ENCODE measurements at regions of chr20 and their contacts with region 1.

Region 1: GRCh38 chr20:41094353-41095055 is 42.8 kb upstream of the PLCG1 start:
- DNase-seq: no peak
- H3K4me3 ChIP-seq: no peak overlapping the region
- H3K4me1 ChIP-seq: no peaks in the 10 kb centered on the region
- H3K27me3 ChIP-seq: no peaks in the 10 kb centered on the region

Region 2: DNA sequence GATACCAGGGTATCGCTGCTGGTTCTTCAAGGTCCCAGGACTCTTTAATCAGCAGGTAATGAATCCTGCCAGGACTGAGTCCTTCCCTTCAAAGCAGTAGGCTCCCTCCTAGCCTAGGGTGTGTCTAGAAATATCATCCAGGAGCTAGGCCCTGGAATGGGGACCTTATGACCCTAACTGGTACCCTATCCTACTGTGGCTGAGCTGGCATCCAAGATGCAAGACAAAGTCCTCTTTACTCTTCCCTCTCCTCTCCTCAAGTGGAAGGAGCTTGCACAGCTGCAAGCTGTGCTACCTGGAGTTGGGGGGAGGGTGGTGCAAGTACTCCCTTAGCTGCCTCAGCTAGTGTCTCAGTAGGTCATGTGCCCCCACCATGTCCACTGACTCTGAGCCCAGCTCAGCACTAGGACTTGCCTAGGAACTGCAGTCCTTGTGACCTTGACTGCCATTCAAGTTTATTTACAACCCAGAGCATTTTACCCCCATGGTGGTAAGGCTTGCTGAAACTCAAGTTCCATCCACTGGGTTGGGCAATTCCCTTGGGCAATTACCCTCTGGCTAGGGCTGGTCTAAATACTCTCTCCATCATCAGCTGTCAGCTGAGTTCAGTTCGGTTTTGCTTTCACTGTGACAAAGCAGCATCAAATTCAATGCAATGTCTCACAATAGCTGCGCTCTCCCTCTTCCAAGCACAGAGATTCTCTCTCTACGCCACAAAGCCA is 114.2 kb before region 1 on chr20:
- in situ Hi-C with region 1: loop called (anchors 5 kb)
- DNase-seq: no peak
- H3K4me3 ChIP-seq: no peak overlapping the region
- H3K4me1 ChIP-seq: no peaks in the 10 kb centered on the region
- H3K27me3 ChIP-seq: no peaks in the 10 kb centered on the region

Region 3: GRCh38 chr20:41167481-41168253 is 73.2 kb after region 1 on chr20:
- in situ Hi-C with region 1: no loop called
- DNase-seq: no peak
- H3K4me3 ChIP-seq: no peak overlapping the region
- H3K4me1 ChIP-seq: no peaks in the 10 kb centered on the region
- H3K27me3 ChIP-seq: no peaks in the 10 kb centered on the region

Measured in HAP-1 (cell line).